ENCODE measurements at regions of chr6 and their contacts with region 1.

Region 1: GRCh38 chr6:158910484-158911348 is 89.3 kb downstream of the RSPH3 start:
- DNase-seq: peak; percentile 63 to 94
- H3K4me3 ChIP-seq: peak overlapping the region; percentile 51
- H3K27ac ChIP-seq: peak overlapping the region; percentile 97
- H3K4me1 ChIP-seq: peaks cover 46% of the 10 kb centered on the region
- H3K27me3 ChIP-seq: no peaks in the 10 kb centered on the region
- CTCF ChIP-seq: no peak

Region 2: DNA sequence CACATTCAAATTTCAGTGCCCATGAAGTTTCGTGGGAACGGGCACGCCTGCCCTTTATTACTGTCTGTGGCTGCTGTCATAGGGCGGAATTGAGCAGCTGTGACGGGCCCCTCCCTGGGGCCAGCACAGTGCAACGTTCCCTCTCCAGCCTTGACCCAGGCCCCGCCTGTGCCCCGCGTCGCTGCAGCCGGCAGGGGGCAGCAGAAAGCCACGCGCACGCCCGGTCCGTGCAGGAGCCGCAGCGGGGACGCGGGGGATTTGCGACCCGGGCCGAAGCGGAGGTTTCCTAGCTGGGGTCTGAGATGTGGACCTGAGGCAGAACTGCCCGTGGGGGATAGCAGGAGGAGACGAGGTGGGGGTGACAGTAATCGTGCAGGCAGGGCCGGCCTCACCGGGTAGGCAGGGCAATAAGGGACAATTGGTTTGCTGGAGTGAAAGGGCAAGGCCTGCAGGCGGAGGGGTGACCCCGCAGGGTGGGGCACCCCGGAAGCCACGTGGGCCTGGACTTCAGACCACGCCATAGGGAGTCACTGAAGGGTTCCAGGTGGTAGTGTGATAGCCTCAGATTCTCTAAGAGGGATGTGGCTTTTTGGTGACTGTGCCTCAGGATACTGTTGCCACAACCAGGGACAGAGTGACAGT is 206.4 kb before region 1 on chr6:
- CTCF ChIA-PET with region 1: no interaction called
- POLR2A ChIA-PET with region 1: interaction called, 4 read pairs
- intact Hi-C with region 1: loop called (anchors 10 kb)
- DNase-seq: peak; percentile 81 to 88
- H3K4me3 ChIP-seq: peak overlapping the region; percentile 46; the same call in 1 of the 2 replicates
- H3K27ac ChIP-seq: peak overlapping the region; percentile 94
- H3K4me1 ChIP-seq: peaks cover 54% of the 10 kb centered on the region
- H3K27me3 ChIP-seq: no peaks in the 10 kb centered on the region
- CTCF ChIP-seq: peak; percentile 98

Region 3: DNA sequence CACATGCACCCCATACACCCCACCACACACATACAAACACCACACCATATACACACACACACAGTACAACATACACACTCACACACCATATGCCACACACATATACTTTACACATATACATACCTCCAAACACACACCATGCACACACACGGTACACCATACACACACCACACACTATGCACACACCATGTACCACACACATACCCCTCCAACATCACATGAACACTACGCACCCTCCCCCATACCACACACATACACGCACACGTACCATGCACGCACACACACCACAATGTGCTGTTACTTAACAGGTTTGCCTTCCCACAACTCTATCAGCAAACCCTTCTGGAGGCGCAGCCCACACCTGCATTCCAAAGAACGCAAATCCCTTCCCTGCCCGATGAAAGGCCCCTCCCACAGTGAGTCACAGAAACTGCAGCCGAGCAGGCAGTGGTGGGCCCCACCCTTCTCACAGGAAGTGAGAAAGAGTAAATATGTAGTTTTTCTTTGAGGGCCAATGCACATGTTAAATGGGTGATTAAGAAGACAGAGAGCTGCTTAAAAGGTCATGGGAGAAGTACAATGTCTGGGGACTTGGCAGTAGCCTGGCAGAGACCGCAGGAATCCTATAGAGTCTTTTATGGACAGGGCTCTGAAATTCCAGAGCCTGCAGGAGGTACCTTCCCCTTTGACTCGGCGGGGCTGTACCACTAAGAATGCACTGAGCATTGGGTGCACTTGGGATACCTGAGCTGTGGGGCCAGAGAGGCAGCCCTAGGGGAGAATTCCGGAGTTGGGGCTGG is 57.4 kb before region 1 on chr6:
- CTCF ChIA-PET with region 1: no interaction called
- POLR2A ChIA-PET with region 1: interaction called, 3 read pairs
- intact Hi-C with region 1: loop called (anchors 1 kb)
- DNase-seq: peak; percentile 92 to 100
- H3K4me3 ChIP-seq: peak overlapping the region; percentile 51
- H3K27ac ChIP-seq: peak overlapping the region; percentile 99
- H3K4me1 ChIP-seq: peaks cover 93% of the 10 kb centered on the region
- H3K27me3 ChIP-seq: no peaks in the 10 kb centered on the region
- CTCF ChIP-seq: no peak

Region 4: GRCh38 chr6:158894193-158894592 is 16.5 kb before region 1 on chr6:
- CTCF ChIA-PET with region 1: no interaction called
- POLR2A ChIA-PET with region 1: no interaction called
- intact Hi-C with region 1: loop called (anchors 2 kb)
- DNase-seq: peak; percentile 38 to 96
- H3K4me3 ChIP-seq: no peak overlapping the region
- H3K27ac ChIP-seq: peak overlapping the region; percentile 50
- H3K4me1 ChIP-seq: peaks cover 26% of the 10 kb centered on the region
- H3K27me3 ChIP-seq: no peaks in the 10 kb centered on the region
- CTCF ChIP-seq: no peak

Region 5: GRCh38 chr6:158972241-158973233 is 61.8 kb after region 1 on chr6:
- CTCF ChIA-PET with region 1: no interaction called
- POLR2A ChIA-PET with region 1: no interaction called
- intact Hi-C with region 1: loop called (anchors 5 kb)
- DNase-seq: peak; percentile 4 to 60
- H3K4me3 ChIP-seq: no peak overlapping the region
- H3K27ac ChIP-seq: peak overlapping the region; percentile 42
- H3K4me1 ChIP-seq: peaks cover 6% of the 10 kb centered on the region
- H3K27me3 ChIP-seq: no peaks in the 10 kb centered on the region
- CTCF ChIP-seq: peak; percentile 82

Region 6: GRCh38 chr6:159427771-159428170 is 517.1 kb after region 1 on chr6:
- CTCF ChIA-PET with region 1: no interaction called
- POLR2A ChIA-PET with region 1: no interaction called
- intact Hi-C with region 1: no loop called
- DNase-seq: no peak
- H3K4me3 ChIP-seq: no peak overlapping the region
- H3K27ac ChIP-seq: no peak overlapping the region
- H3K4me1 ChIP-seq: no peaks in the 10 kb centered on the region
- H3K27me3 ChIP-seq: peaks cover 17% of the 10 kb centered on the region; the same call in 1 of the 2 replicates
- CTCF ChIP-seq: no peak

Region 7: DNA sequence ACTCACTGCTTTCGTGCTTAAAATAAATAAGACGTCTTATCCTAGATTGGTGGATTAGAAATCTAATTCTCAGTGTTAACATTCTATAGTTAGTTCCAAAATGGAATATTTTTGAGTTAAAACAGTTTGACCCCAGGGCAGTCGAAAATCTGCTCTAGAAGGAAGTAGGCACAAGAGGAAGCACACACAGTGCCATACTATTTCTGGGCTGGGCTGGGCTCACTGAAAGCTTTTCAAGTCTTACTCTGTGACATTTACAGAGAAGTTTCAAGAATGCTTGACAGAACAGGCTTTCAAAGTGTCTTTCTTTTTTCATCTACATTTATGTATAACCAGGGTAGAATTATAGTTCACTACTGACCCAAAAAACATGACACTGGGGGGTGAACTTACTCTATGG is 572.5 kb after region 1 on chr6:
- CTCF ChIA-PET with region 1: no interaction called
- POLR2A ChIA-PET with region 1: no interaction called
- intact Hi-C with region 1: no loop called
- DNase-seq: no peak
- H3K4me3 ChIP-seq: no peak overlapping the region
- H3K27ac ChIP-seq: no peak overlapping the region
- H3K4me1 ChIP-seq: no peaks in the 10 kb centered on the region
- H3K27me3 ChIP-seq: peaks cover 22% of the 10 kb centered on the region; the same call in 1 of the 2 replicates
- CTCF ChIP-seq: no peak